ENCODE measurements at regions of chr6 and their contacts with region 1.

Region 1: DNA sequence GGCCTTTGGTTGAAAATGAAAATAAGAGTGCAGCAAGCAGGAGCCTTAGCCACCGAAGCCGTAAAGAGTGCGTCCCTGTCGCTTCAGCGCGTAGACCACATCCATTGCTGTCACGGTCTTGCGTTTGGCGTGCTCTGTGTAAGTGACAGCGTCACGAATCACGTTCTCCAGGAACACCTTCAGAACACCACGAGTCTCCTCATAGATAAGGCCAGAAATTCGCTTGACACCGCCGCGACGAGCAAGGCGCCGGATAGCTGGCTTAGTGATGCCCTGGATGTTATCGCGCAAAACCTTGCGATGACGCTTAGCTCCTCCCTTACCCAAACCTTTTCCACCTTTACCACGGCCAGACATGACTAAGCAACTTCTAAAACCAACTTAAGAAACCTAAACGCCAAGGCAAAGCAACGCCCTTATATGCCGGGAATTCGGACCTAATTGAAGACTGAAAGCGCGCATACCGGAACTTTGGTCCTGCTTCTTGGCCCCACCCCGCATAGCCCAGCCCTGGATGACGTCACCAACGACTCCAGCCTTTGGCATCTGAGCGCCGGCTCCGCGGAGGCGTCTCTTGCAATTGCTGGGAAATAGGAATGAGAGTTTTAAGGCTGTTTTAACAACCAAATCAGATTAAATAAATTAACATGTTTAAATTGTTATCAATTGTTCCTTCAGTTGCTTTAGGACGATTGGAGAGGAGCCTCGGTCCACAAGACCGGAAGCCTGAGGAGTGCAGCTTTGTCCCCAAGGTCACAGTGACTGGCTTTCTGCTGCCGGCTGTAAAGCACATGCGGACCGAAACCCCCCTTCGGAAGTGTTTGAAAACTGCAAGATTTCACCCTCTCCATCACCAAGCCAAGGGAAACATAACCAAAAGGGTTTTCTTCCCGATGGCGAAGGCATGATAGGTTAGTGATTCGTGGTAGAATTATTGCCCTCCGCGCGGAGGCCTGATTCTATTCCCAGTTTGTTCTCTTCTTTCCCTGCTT is 79.6 kb upstream of the BTN3A2 start:
- DNase-seq: peak; percentile 97 to 99 (median 97)
- ATAC-seq: peak; percentile 95
- H3K4me3 ChIP-seq: peak overlapping the region; percentile 72
- H3K27ac ChIP-seq: peak overlapping the region; percentile 99
- H3K4me1 ChIP-seq: peaks cover 5% of the 10 kb centered on the region
- H3K27me3 ChIP-seq: no peaks in the 10 kb centered on the region

Region 2: GRCh38 chr6:26204332-26205165 is 80.9 kb before region 1 on chr6:
- intact Hi-C with region 1: loop called in 1 of 4 experiments (anchors 10 kb)
- DNase-seq: peak; percentile 91 to 95 (median 94)
- ATAC-seq: peak; percentile 93 to 95
- H3K4me3 ChIP-seq: peak overlapping the region; percentile 82
- H3K27ac ChIP-seq: peak overlapping the region; percentile 100
- H3K4me1 ChIP-seq: no peaks in the 10 kb centered on the region
- H3K27me3 ChIP-seq: no peaks in the 10 kb centered on the region

Region 3: DNA sequence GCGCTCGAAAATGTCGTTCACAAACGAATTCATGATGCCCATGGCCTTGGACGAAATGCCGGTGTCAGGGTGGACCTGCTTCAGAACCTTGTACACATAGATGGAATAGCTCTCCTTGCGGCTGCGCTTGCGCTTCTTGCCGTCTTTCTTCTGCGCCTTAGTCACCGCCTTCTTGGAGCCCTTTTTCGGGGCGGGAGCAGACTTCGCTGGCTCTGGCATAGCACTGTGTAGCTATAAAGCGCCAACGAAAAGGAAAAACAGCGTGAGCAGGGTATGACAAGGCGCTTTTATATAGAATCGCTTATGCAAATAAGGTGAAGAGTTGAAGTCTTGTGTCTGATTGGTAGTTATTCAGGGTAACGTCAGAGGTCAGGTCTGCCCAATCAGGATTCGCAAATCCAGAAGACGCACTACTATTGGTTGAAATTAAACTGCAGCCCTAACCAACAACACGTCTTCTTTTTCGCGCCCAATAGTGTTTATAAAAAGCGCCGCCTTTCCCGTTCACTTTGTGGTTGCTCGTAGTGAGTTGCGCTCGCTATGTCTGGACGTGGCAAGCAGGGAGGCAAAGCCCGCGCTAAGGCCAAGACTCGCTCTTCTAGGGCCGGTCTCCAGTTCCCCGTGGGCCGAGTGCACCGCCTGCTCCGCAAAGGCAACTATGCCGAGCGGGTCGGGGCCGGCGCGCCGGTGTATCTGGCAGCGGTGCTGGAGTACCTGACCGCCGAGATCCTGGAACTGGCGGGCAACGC is 847.3 kb after region 1 on chr6:
- intact Hi-C with region 1: loop called in 1 of 4 experiments (anchors 10 kb)
- DNase-seq: peak; percentile 88 to 93 (median 91)
- ATAC-seq: peak; percentile 96 to 98
- H3K4me3 ChIP-seq: peak overlapping the region; percentile 41
- H3K27ac ChIP-seq: peak overlapping the region; percentile 99
- H3K4me1 ChIP-seq: peaks cover 4% of the 10 kb centered on the region
- H3K27me3 ChIP-seq: no peaks in the 10 kb centered on the region

Measured in right cardiac atrium (tissue), 5 donors.